Thyroid gland (tissue), 4 donors: ENCODE measurements at regions of chr16 and their contacts with region 1.

Region 1: GRCh38 chr16:70653809-70654771 is 7.7 kb downstream of the IL34 start:
- DNase-seq: peak; percentile 85 to 88
- H3K4me3 ChIP-seq: no peak overlapping the region
- H3K27ac ChIP-seq: peak overlapping the region in 2 of 3 donors; percentile 6 to 13
- H3K4me1 ChIP-seq: peaks cover 3 to 10% of the 10 kb centered on the region in 2 donors
- H3K27me3 ChIP-seq: no peaks in the 10 kb centered on the region
- CTCF ChIP-seq: peak; percentile 67 to 99 (median 92)
- POLR2A ChIP-seq: no peak

Region 2: GRCh38 chr16:70395345-70395901 is 258.7 kb before region 1 on chr16:
- intact Hi-C with region 1: loop called (anchors 10 kb)
- DNase-seq: peak; percentile 55 to 65
- H3K4me3 ChIP-seq: no peak overlapping the region
- H3K27ac ChIP-seq: no peak overlapping the region
- H3K4me1 ChIP-seq: no peaks in the 10 kb centered on the region
- H3K27me3 ChIP-seq: no peaks in the 10 kb centered on the region
- CTCF ChIP-seq: peak in 5 of 6 experiments; percentile 44 to 63 (median 55)
- POLR2A ChIP-seq: no peak

Region 3: DNA sequence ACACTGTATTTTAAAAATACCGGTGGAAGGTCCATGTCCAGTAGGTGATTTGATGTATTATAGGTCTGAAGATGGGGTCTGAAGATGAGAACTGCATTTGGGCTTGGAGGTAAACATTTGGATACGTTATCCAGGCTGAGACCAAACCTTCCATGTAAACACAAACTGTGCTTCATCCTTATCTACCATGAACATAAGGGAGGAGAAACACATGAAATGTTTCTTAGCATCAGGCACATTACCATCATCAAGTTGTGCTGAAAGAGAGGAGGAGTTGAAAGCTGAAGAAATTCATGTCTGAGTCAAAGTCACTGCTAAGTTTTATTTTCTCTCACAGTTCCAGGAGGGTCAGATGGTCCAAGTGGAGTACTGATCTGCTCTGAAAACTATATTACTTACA is 119.1 kb before region 1 on chr16:
- intact Hi-C with region 1: loop called (anchors 5 kb)
- DNase-seq: no peak
- H3K4me3 ChIP-seq: no peak overlapping the region
- H3K27ac ChIP-seq: no peak overlapping the region
- H3K4me1 ChIP-seq: no peaks in the 10 kb centered on the region
- H3K27me3 ChIP-seq: no peaks in the 10 kb centered on the region
- CTCF ChIP-seq: no peak
- POLR2A ChIP-seq: no peak

Region 4: DNA sequence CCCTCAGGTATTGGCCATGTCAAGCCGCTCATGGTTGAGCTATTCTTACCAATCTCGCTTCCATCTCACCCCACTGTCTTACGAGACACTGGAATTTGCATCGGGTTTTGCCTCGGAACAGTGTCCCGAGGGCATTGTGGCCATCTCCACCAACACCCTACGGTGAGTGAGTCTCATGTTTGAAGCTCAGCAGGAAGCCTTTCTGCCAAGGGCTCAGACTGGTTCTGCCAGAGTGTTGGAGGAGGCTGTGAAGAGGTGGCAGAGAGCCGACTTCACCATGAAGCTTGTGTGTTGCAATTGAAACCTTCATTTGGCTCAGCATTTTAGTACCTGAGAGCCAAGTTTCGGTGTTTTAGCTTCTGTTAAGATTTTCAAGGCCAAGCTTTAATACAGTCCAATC is 92.5 kb before region 1 on chr16:
- intact Hi-C with region 1: no loop called
- DNase-seq: peak; percentile 67 to 85
- H3K4me3 ChIP-seq: no peak overlapping the region
- H3K27ac ChIP-seq: peak overlapping the region in 1 of 3 donors; percentile 44
- H3K4me1 ChIP-seq: no peaks in the 10 kb centered on the region
- H3K27me3 ChIP-seq: no peaks in the 10 kb centered on the region
- CTCF ChIP-seq: no peak
- POLR2A ChIP-seq: no peak